ENCODE measurements at regions of chr16 and their contacts with region 1.

Region 1: DNA sequence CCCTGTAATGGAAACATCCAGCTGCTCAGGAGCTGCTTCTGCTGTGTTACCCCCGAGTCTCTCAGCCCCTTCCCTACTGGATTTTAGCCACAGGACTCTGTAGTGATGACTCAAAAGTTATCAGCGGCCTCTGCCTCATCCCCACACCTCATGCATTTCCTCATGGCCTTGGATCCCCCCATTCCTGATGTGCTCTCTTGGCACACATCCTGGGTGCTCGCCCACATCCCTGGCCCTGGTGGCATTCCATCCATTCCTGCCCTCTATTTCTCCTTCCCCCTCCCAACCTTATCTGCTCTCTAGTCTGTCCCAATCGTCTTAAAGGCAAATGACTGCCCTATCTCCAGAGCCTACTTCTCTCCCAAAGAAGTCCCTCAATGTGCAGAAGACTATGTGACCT is 24.6 kb downstream of the MARF1 start:
- DNase-seq: no peak
- H3K4me3 ChIP-seq: no peak overlapping the region
- H3K27ac ChIP-seq: no peak overlapping the region
- H3K4me1 ChIP-seq: no peaks in the 10 kb centered on the region
- H3K27me3 ChIP-seq: no peaks in the 10 kb centered on the region
- CTCF ChIP-seq: no peak
- EP300 ChIP-seq: no peak
- POLR2A ChIP-seq: no peak

Region 2: DNA sequence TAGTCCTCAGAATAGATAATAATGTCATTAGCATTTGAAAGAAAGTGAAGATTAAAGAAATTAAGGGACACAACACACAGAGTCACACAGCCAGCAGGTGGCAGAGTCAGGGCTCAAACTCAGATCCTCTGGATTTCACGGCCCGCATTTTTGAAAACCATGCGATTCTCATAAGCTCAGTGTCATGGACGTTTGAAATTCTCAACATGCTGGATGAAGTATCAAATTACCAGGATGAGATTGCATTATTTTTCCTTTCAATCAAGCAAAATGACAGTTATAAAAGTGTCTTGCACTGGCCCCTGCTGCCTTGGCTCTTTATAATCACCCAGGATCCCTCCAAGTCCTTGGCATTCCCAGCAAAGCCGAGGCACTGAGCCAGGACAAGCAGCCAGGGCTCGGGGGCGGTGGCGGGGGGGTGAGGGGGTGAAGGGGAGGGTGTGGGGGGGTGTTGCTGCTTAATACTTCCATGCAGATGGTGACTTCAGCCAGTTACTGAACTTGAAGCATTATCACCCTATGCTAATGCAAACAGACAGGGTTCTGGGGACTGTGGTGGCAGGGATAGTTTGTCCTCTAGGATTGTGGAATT is 190.6 kb before region 1 on chr16:
- intact Hi-C with region 1: loop called (anchors 10 kb)
- DNase-seq: no peak
- H3K4me3 ChIP-seq: peak overlapping the region; percentile 13 to 36 (median 26)
- H3K27ac ChIP-seq: peak overlapping the region; percentile 3 to 61 (median 52)
- H3K4me1 ChIP-seq: peaks cover 6 to 15% (median 12%) of the 10 kb centered on the region in 4 donors
- H3K27me3 ChIP-seq: no peaks in the 10 kb centered on the region
- CTCF ChIP-seq: peak; percentile 68 to 84 (median 70)
- EP300 ChIP-seq: no peak
- POLR2A ChIP-seq: no peak

Region 3: DNA sequence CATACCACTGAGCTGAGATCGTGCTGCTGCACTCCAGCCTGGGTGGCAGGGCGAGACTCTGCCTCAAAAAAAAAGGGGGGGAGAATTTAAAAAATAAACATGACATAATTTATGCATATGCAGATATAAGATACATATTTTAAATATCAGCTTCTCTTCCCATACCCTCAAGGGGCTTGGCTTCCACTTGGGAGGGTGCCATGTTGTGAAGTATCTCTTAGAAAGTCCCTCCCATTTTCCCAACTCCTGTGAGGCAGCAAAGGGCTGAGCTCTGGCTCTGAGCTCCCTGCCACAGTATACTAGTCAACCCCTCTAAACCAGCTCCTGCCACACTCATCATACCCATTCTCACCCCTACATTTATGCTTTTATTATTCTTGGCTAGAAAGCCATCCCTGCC is 199.1 kb after region 1 on chr16:
- intact Hi-C with region 1: no loop called
- DNase-seq: no peak
- H3K4me3 ChIP-seq: peak overlapping the region in 1 of 4 donors; percentile 19
- H3K27ac ChIP-seq: peak overlapping the region; percentile 69 to 95 (median 91)
- H3K4me1 ChIP-seq: peaks cover 0 to 97% (median 94%) of the 10 kb centered on the region in 4 donors
- H3K27me3 ChIP-seq: no peaks in the 10 kb centered on the region
- CTCF ChIP-seq: no peak
- EP300 ChIP-seq: no peak
- POLR2A ChIP-seq: no peak

Measured in esophagus muscularis mucosa (tissue), 4 donors.